CD8-positive, alpha-beta T cell (primary cell): ENCODE measurements at regions of chr1 and their contacts with region 1.

Region 1: GRCh38 chr1:160078512-160079195 is 2.7 kb upstream of the KCNJ9 start:
- DNase-seq: peak in 8 of 9 experiments; percentile 33 to 71 (median 60)
- ATAC-seq: peak; percentile 96
- H3K4me3 ChIP-seq: no peak overlapping the region
- H3K4me3 Mint-ChIP-seq: no peak overlapping the region
- H3K27ac ChIP-seq: no peak overlapping the region
- H3K27ac Mint-ChIP-seq: no peak overlapping the region
- H3K4me1 ChIP-seq: peaks cover 6% of the 10 kb centered on the region
- H3K4me1 Mint-ChIP-seq: peaks cover 4% of the 10 kb centered on the region
- H3K27me3 ChIP-seq: peaks cover 19 to 24% of the 10 kb centered on the region in 2 experiments
- H3K27me3 Mint-ChIP-seq: peaks cover 58% of the 10 kb centered on the region
- CTCF ChIP-seq: peak; percentile 84

Region 2: DNA sequence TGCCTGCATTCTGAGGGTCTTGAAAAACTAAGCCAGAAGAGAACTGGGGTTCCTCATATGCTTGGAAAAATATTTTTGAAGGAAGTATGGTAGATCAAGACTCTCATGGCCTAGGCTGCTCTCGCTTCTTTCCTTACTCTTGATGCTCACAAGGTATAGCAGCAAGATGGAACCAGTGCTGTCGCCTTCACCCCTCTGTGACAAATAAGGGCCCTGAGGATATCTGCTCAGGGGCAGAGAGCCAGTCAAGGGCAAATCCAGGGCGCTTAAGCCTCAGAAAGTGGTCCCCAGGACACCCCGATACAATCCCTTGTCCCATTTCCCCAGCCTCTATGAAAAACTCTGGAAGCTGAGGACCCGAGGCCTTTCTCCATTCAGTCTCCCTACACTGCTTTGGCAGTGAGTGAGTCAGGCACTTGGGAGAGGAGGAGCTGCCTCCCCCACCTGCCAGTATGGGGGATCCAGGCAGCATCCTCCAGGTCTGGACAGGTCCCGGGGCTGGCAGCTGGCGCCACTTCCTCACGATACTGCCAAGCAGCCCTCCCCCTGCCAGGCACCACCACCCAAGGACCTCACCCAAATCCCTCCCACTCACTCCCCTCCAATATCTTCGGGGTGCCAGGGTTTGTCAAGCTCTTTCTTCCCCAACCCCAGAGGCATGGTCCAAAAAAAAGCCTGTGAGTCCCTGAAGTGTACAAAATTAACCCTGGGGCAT is 134.6 kb before region 1 on chr1:
- CTCF ChIA-PET with region 1: no interaction called
- POLR2A ChIA-PET with region 1: no interaction called
- intact Hi-C with region 1: no loop called
- DNase-seq: no peak
- ATAC-seq: no peak
- H3K4me3 ChIP-seq: no peak overlapping the region
- H3K4me3 Mint-ChIP-seq: no peak overlapping the region
- H3K27ac ChIP-seq: no peak overlapping the region
- H3K27ac Mint-ChIP-seq: no peak overlapping the region
- H3K4me1 ChIP-seq: peaks cover 12% of the 10 kb centered on the region
- H3K4me1 Mint-ChIP-seq: peaks cover 13% of the 10 kb centered on the region
- H3K27me3 ChIP-seq: peaks cover 5 to 16% of the 10 kb centered on the region in 2 experiments
- H3K27me3 Mint-ChIP-seq: peaks cover 27% of the 10 kb centered on the region
- CTCF ChIP-seq: no peak

Region 3: GRCh38 chr1:160058087-160058486 is 20.6 kb before region 1 on chr1:
- CTCF ChIA-PET with region 1: interaction called, 320 read pairs
- POLR2A ChIA-PET with region 1: interaction called, 4 read pairs
- intact Hi-C with region 1: no loop called
- DNase-seq: no peak
- ATAC-seq: no peak
- H3K4me3 ChIP-seq: no peak overlapping the region
- H3K4me3 Mint-ChIP-seq: no peak overlapping the region
- H3K27ac ChIP-seq: no peak overlapping the region
- H3K27ac Mint-ChIP-seq: no peak overlapping the region
- H3K4me1 ChIP-seq: no peaks in the 10 kb centered on the region
- H3K4me1 Mint-ChIP-seq: no peaks in the 10 kb centered on the region
- H3K27me3 ChIP-seq: no peaks in the 10 kb centered on the region
- H3K27me3 Mint-ChIP-seq: peaks cover 31% of the 10 kb centered on the region
- CTCF ChIP-seq: no peak